Transverse colon (tissue), 4 donors: ENCODE measurements at regions of chr2 and their contacts with region 1.

Region 1: DNA sequence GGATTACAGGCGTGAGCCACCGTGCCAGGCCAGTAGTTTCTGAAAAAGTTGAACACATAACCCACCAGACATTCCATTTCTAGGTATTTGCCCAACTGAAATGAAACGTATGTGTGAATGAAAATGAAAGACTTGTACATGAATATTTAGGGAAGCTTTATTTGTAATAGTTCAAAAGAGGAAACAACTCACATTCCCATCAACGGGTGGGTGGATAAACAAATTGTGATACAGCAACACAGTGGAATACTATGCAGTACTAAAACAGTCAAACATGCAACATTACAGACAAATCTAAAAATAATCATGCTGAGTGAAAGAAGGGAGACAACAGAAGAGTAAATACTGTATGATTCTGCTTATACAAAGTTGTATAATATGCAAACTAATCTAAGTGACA is 46.8 kb downstream of the TMEM131 start:
- DNase-seq: no peak
- H3K4me3 ChIP-seq: no peak overlapping the region
- H3K27ac ChIP-seq: no peak overlapping the region
- H3K4me1 ChIP-seq: peaks cover 4 to 52% (median 13%) of the 10 kb centered on the region in 4 donors
- H3K27me3 ChIP-seq: no peaks in the 10 kb centered on the region
- CTCF ChIP-seq: no peak
- EP300 ChIP-seq: no peak
- POLR2A ChIP-seq: no peak

Region 2: GRCh38 chr2:97966518-97967215 is 17.7 kb after region 1 on chr2:
- in situ Hi-C with region 1: no loop called
- intact Hi-C with region 1: loop called (anchors 1 kb)
- DNase-seq: no peak
- H3K4me3 ChIP-seq: no peak overlapping the region
- H3K27ac ChIP-seq: peak overlapping the region; percentile 67 to 84 (median 80)
- H3K4me1 ChIP-seq: peaks cover 26 to 98% (median 59%) of the 10 kb centered on the region in 4 donors
- H3K27me3 ChIP-seq: no peaks in the 10 kb centered on the region
- CTCF ChIP-seq: no peak
- EP300 ChIP-seq: no peak
- POLR2A ChIP-seq: no peak